Panc1 (cell line): ENCODE measurements at regions of chr14 and their contacts with region 1.

Region 1: GRCh38 chr14:105375635-105376057 is 22.7 kb upstream of the TEX22 start:
- DNase-seq: no peak
- ATAC-seq: no peak
- H3K4me3 ChIP-seq: no peak overlapping the region
- H3K27ac ChIP-seq: no peak overlapping the region
- H3K4me1 ChIP-seq: no peaks in the 10 kb centered on the region
- H3K27me3 ChIP-seq: no peaks in the 10 kb centered on the region
- CTCF ChIP-seq: no peak

Region 2: GRCh38 chr14:105207996-105208737 is 167.5 kb before region 1 on chr14:
- CTCF ChIA-PET with region 1: no interaction called
- POLR2A ChIA-PET with region 1: interaction called, 14 read pairs
- in situ Hi-C with region 1: no loop called
- intact Hi-C with region 1: no loop called
- DNase-seq: no peak
- ATAC-seq: no peak
- H3K4me3 ChIP-seq: no peak overlapping the region
- H3K27ac ChIP-seq: no peak overlapping the region
- H3K4me1 ChIP-seq: no peaks in the 10 kb centered on the region; the same call in 1 of the 2 replicates
- H3K27me3 ChIP-seq: no peaks in the 10 kb centered on the region
- CTCF ChIP-seq: no peak

Region 3: DNA sequence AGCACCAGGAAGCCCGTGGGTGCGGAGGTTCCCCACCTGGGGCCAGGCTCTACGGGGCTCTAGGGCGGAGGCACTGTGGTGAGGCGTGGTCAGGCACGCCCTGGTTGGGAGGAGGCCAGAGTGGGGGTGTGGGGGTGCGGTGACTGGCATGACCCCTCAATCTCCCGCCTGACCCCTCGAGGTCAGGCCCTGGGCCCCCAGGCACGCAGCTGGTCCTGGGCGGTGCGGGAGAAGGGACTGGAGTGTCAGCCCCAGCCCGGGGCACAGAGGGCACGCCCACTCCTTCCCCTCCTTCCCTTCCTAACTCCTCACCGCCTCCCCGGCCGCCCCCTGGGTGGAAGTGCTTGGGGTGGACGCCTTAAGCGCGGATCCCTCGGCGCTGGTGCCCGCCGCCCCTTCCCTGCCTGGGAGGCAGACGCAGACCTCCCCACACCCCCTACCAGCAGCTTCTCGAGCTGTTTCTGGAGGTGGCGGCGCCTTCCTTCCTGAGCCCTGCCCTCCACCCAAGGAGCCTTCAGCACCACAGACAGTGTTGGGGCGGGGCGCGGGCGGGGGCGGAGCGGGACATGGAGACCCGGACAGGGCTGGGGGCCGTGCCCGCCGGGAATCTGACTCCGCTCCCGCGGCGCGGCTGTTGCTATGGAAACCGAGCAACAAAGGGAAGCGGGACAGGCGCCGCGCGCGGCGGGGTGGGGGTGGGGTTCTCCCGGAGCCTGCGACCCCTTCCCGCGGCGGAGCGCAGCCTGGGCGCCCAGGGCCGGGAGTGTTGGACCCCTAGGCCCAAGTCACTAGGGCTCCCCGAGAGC is 98.2 kb after region 1 on chr14:
- CTCF ChIA-PET with region 1: interaction called, 10 read pairs
- POLR2A ChIA-PET with region 1: no interaction called
- in situ Hi-C with region 1: no loop called
- intact Hi-C with region 1: no loop called
- DNase-seq: no peak
- ATAC-seq: peak; percentile 67
- H3K4me3 ChIP-seq: peak overlapping the region; percentile 49 to 65
- H3K27ac ChIP-seq: peak overlapping the region; percentile 81
- H3K4me1 ChIP-seq: peaks cover 37% of the 10 kb centered on the region
- H3K27me3 ChIP-seq: no peaks in the 10 kb centered on the region
- CTCF ChIP-seq: no peak

Region 4: GRCh38 chr14:105480952-105481801 is 105.5 kb after region 1 on chr14:
- CTCF ChIA-PET with region 1: no interaction called
- POLR2A ChIA-PET with region 1: no interaction called
- in situ Hi-C with region 1: no loop called
- intact Hi-C with region 1: loop called (anchors 10 kb)
- DNase-seq: no peak
- ATAC-seq: peak; percentile 66
- H3K4me3 ChIP-seq: peak overlapping the region; percentile 23 to 50
- H3K27ac ChIP-seq: peak overlapping the region; percentile 89
- H3K4me1 ChIP-seq: peaks cover 67% of the 10 kb centered on the region
- H3K27me3 ChIP-seq: no peaks in the 10 kb centered on the region
- CTCF ChIP-seq: peak; percentile 94